Activated CD4-positive, alpha-beta T cell treated with anti-CD3 and anti-CD28 coated beads for 36 hours (primary cell): ENCODE measurements at regions of chr5 and their contacts with region 1.

Region 1: DNA sequence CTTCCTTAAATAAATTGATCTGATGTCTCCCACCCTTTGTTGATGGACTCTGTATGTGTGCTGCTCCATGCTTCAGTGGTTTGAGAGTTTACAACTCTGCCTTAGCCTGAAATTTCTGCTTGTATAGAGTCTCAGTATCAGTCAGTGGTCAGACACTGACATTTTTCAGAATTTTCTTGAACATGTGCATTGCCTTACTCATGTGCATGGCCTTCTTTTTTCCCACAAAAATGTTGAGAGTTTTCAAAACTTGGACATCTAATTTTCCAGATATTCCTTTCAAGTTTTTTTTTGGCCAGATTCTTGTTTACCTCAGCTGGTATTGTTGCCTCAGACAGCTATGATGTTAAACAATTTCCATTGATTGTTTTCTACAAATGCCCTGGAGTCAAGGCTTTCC is 427.1 kb upstream of the CHD1 start:
- DNase-seq: no peak
- ATAC-seq: no peak
- H3K4me3 Mint-ChIP-seq: no peak overlapping the region
- H3K27ac Mint-ChIP-seq: no peak overlapping the region
- H3K4me1 Mint-ChIP-seq: no peaks in the 10 kb centered on the region
- H3K27me3 Mint-ChIP-seq: no peaks in the 10 kb centered on the region

Region 2: GRCh38 chr5:99449786-99450185 is 93.9 kb after region 1 on chr5:
- CTCF ChIA-PET with region 1: no interaction called
- POLR2A ChIA-PET with region 1: no interaction called
- intact Hi-C with region 1: no loop called
- DNase-seq: no peak
- ATAC-seq: no peak
- H3K4me3 Mint-ChIP-seq: no peak overlapping the region
- H3K27ac Mint-ChIP-seq: no peak overlapping the region
- H3K4me1 Mint-ChIP-seq: no peaks in the 10 kb centered on the region
- H3K27me3 Mint-ChIP-seq: no peaks in the 10 kb centered on the region

Region 3: GRCh38 chr5:99814321-99815063 is 458.6 kb after region 1 on chr5:
- CTCF ChIA-PET with region 1: no interaction called
- POLR2A ChIA-PET with region 1: interaction called, 13 read pairs
- intact Hi-C with region 1: no loop called
- DNase-seq: no peak
- ATAC-seq: no peak
- H3K4me3 Mint-ChIP-seq: no peak overlapping the region
- H3K27ac Mint-ChIP-seq: no peak overlapping the region
- H3K4me1 Mint-ChIP-seq: no peaks in the 10 kb centered on the region
- H3K27me3 Mint-ChIP-seq: no peaks in the 10 kb centered on the region